Prostate gland (tissue), 2 donors: ENCODE measurements at regions of chr5 and their contacts with region 1.

Region 1: GRCh38 chr5:7815892-7816534 is 34.9 kb downstream of the CFAP90 start:
- DNase-seq: peak; percentile 73
- H3K4me3 ChIP-seq: no peak overlapping the region
- H3K27ac ChIP-seq: peak overlapping the region; percentile 2 to 4
- H3K4me1 ChIP-seq: no peaks in the 10 kb centered on the region
- H3K27me3 ChIP-seq: no peaks in the 10 kb centered on the region
- CTCF ChIP-seq: peak; percentile 71 to 85 (median 79)
- POLR2A ChIP-seq: no peak

Region 2: GRCh38 chr5:7078901-7079300 is 737.1 kb before region 1 on chr5:
- intact Hi-C with region 1: loop called (anchors 10 kb)
- DNase-seq: no peak
- H3K4me3 ChIP-seq: no peak overlapping the region
- H3K27ac ChIP-seq: no peak overlapping the region
- H3K4me1 ChIP-seq: no peaks in the 10 kb centered on the region
- H3K27me3 ChIP-seq: no peaks in the 10 kb centered on the region
- CTCF ChIP-seq: peak in 2 of 4 experiments; percentile 31 to 32
- POLR2A ChIP-seq: no peak

Region 3: GRCh38 chr5:7261049-7261448 is 555.0 kb before region 1 on chr5:
- intact Hi-C with region 1: loop called (anchors 10 kb)
- DNase-seq: peak; percentile 22
- H3K4me3 ChIP-seq: no peak overlapping the region
- H3K27ac ChIP-seq: no peak overlapping the region
- H3K4me1 ChIP-seq: no peaks in the 10 kb centered on the region
- H3K27me3 ChIP-seq: no peaks in the 10 kb centered on the region
- CTCF ChIP-seq: peak in 3 of 4 experiments; percentile 59 to 66 (median 62)
- POLR2A ChIP-seq: no peak

Region 4: GRCh38 chr5:7753596-7753995 is 62.4 kb before region 1 on chr5:
- intact Hi-C with region 1: loop called (anchors 2 kb)
- DNase-seq: no peak
- H3K4me3 ChIP-seq: no peak overlapping the region
- H3K27ac ChIP-seq: no peak overlapping the region
- H3K4me1 ChIP-seq: no peaks in the 10 kb centered on the region
- H3K27me3 ChIP-seq: no peaks in the 10 kb centered on the region
- CTCF ChIP-seq: no peak
- POLR2A ChIP-seq: no peak